Activated B cell treated with CpG ODN at 0.5 μM for 24 hours (primary cell): ENCODE measurements at regions of chr1 and their contacts with region 1.

Region 1: DNA sequence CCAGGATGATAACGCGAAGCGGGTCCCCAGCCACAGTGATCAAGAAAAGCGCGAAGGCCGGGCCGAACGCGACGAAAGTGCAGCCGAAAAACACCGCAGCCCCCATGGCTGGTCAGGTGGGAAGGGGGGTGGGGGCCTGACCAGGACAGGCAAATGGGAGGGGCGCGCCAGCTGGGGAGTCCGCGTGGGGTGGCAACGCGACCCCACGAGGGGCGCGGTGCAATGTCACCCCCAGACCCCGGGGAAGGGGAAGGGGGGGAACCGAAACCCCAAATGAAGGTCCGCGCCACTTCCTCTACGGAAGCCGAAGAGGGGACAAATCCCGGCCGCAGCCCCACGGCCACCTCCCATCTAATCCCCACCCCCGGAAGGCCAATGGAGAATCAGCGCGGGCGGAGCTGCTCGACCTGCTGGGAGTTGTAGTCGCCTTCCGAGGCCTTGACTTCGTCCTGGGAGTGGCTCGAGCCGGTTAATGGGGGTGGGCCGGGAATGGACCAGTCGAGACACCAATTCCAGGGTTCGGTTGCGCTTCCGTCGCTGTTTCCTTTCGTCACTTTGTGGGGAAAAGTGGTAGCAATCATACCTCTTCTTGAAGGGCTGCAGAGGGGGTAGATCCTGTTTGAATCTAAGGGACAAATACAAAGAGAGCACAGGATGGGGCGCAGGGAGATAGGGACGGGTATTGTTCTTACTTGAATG is at the start of gene APH1A:
- DNase-seq: peak; percentile 86
- ATAC-seq: peak; percentile 97
- H3K4me3 Mint-ChIP-seq: peak within 1 kb of the TSS; percentile 100
- H3K27ac Mint-ChIP-seq: peak within 1 kb of the TSS; percentile 94
- H3K4me1 Mint-ChIP-seq: peaks cover 32% of the 10 kb centered on the region
- H3K27me3 Mint-ChIP-seq: peaks cover 4% of the 10 kb centered on the region
- CTCF ChIP-seq: no peak
- total RNA-seq, gene APH1A: 145 TPM in 2 replicates

Region 2: GRCh38 chr1:150021191-150021694 is 247.6 kb before region 1 on chr1:
- CTCF ChIA-PET with region 1: no interaction called
- POLR2A ChIA-PET with region 1: no interaction called
- intact Hi-C with region 1: no loop called
- DNase-seq: no peak
- ATAC-seq: no peak
- H3K4me3 Mint-ChIP-seq: no peak overlapping the region
- H3K27ac Mint-ChIP-seq: no peak overlapping the region
- H3K4me1 Mint-ChIP-seq: peaks cover 9% of the 10 kb centered on the region
- H3K27me3 Mint-ChIP-seq: peaks cover 15% of the 10 kb centered on the region
- CTCF ChIP-seq: no peak

Region 3: DNA sequence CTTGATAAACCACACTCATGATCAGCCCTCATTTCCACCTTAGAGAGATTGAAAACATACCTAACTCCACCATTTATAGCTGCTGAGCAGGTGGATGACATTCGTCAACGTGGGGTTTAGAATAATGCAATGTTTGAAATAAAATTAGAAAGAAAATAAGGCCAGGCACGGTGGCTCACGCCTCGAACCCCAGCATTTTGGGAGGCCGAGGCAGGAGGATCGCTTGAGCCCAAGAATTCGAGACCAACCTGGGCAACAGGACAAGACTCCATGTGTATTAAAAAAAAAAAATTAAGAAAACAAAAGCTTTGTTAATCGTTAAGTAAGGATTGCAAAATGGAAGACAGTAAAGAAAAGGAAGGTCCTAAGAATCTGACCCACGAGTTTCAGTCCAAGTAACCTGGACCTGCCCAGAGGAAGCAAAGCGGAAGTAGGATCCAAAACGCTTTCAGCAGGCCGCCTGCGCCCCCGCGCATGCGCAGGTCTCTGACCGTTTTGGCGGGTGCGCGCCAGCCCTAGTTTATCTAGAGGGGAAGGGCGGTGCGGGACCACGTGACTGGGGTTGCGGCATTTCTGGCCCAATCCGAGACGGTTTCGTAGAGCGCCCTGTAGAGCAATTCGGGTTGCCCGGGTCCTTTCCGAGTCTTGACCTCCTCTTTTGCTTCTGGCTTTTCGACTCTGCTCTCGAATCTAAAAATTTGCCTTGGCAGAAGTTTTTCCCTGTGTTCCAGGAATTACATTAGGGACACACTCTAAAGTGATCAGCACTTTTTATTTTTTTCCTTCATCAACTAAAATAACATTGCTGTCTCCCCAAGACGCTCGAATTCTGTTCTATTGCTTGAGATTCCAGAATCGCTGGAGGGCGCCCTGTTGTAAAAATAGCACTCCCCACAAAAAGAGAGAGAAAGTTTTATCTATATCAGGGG is 55.4 kb before region 1 on chr1:
- CTCF ChIA-PET with region 1: no interaction called
- POLR2A ChIA-PET with region 1: no interaction called
- intact Hi-C with region 1: loop called (anchors 1 kb)
- DNase-seq: peak; percentile 77
- ATAC-seq: peak; percentile 99
- H3K4me3 Mint-ChIP-seq: peak overlapping the region; percentile 90
- H3K27ac Mint-ChIP-seq: peak overlapping the region; percentile 94
- H3K4me1 Mint-ChIP-seq: peaks cover 15% of the 10 kb centered on the region
- H3K27me3 Mint-ChIP-seq: no peaks in the 10 kb centered on the region
- CTCF ChIP-seq: no peak

Region 4: GRCh38 chr1:150321826-150322166 is 52.9 kb after region 1 on chr1:
- CTCF ChIA-PET with region 1: no interaction called
- POLR2A ChIA-PET with region 1: interaction called, 6 read pairs
- intact Hi-C with region 1: loop called (anchors 1 kb)
- DNase-seq: no peak
- ATAC-seq: no peak
- H3K4me3 Mint-ChIP-seq: peak overlapping the region; percentile 100
- H3K27ac Mint-ChIP-seq: peak overlapping the region; percentile 99
- H3K4me1 Mint-ChIP-seq: peaks cover 22% of the 10 kb centered on the region
- H3K27me3 Mint-ChIP-seq: peaks cover 2% of the 10 kb centered on the region
- CTCF ChIP-seq: no peak

Region 5: GRCh38 chr1:150387200-150387599 is 118.3 kb after region 1 on chr1:
- CTCF ChIA-PET with region 1: no interaction called
- POLR2A ChIA-PET with region 1: no interaction called
- intact Hi-C with region 1: no loop called
- DNase-seq: no peak
- ATAC-seq: no peak
- H3K4me3 Mint-ChIP-seq: no peak overlapping the region
- H3K27ac Mint-ChIP-seq: no peak overlapping the region
- H3K4me1 Mint-ChIP-seq: peaks cover 30% of the 10 kb centered on the region
- H3K27me3 Mint-ChIP-seq: no peaks in the 10 kb centered on the region
- CTCF ChIP-seq: no peak